ENCODE measurements at regions of chr9 and their contacts with region 1.

Region 1: DNA sequence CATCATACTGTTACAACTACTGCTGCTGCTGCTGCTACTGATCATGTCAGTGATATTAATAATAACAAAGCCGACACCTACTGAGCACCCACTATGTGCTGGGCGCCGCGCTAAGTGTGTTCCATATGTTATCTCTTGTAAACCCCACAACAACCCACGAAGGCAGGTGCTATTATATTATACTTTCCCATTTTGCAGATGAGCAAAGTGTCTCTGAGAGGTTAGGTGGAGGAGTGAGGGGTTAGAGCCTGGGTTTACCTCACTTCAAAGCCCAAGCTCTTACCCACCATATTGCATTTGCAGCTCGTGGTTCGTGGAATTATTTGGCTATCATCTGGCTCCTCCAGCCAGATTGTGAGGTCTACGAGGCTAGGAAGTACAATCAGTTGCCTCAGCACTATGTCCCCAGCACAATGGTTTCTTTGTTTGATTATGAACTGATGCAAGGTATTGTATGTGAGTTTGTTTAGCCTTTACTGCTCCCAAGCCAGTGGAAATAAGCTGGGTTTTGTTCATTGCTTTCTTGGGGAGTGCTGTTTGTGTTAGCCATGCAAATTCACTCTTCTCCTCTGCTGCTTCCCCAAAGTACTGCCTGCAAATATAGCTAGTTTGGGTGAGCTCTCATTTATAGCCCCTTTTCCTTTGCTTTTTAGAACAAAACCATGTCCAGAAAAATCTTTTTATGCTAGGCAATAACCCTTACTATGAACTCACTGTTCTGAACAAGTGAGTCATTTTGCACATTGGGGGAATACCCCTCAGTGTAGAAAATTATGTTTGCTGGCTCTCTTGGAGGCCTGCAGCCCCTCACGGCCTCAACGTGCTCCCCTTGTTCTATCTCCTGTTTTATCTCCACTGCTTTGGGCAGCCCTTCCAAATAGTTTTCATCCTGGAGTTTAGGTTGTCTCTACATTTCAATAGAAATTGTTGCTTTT is 47.9 kb downstream of the ALG2 start:
- DNase-seq: no peak
- ATAC-seq: no peak
- H3K4me3 ChIP-seq: no peak overlapping the region
- H3K27ac ChIP-seq: no peak overlapping the region
- H3K4me1 ChIP-seq: no peaks in the 10 kb centered on the region
- H3K27me3 ChIP-seq: peaks cover 0 to 3% of the 10 kb centered on the region in 2 donors
- CTCF ChIP-seq: no peak

Region 2: GRCh38 chr9:98881836-98882568 is 291.8 kb before region 1 on chr9:
- intact Hi-C with region 1: no loop called
- DNase-seq: no peak
- ATAC-seq: peak; percentile 33
- H3K4me3 ChIP-seq: no peak overlapping the region
- H3K27ac ChIP-seq: peak overlapping the region in 1 of 2 donors; percentile 26
- H3K4me1 ChIP-seq: peaks cover 8 to 16% of the 10 kb centered on the region in 2 donors
- H3K27me3 ChIP-seq: no peaks in the 10 kb centered on the region
- CTCF ChIP-seq: no peak

Region 3: GRCh38 chr9:99118782-99119466 is 54.9 kb before region 1 on chr9:
- intact Hi-C with region 1: loop called in 1 of 2 experiments (anchors 10 kb)
- DNase-seq: no peak
- ATAC-seq: peak; percentile 63
- H3K4me3 ChIP-seq: no peak overlapping the region
- H3K27ac ChIP-seq: peak overlapping the region in 1 of 2 donors; percentile 71
- H3K4me1 ChIP-seq: peaks cover 0 to 81% of the 10 kb centered on the region in 2 donors
- H3K27me3 ChIP-seq: no peaks in the 10 kb centered on the region
- CTCF ChIP-seq: no peak